Activated CD4-positive, alpha-beta memory T cell treated with anti-CD3 and anti-CD28 coated beads for 36 hours (primary cell): ENCODE measurements at regions of chr1 and their contacts with region 1.

Region 1: DNA sequence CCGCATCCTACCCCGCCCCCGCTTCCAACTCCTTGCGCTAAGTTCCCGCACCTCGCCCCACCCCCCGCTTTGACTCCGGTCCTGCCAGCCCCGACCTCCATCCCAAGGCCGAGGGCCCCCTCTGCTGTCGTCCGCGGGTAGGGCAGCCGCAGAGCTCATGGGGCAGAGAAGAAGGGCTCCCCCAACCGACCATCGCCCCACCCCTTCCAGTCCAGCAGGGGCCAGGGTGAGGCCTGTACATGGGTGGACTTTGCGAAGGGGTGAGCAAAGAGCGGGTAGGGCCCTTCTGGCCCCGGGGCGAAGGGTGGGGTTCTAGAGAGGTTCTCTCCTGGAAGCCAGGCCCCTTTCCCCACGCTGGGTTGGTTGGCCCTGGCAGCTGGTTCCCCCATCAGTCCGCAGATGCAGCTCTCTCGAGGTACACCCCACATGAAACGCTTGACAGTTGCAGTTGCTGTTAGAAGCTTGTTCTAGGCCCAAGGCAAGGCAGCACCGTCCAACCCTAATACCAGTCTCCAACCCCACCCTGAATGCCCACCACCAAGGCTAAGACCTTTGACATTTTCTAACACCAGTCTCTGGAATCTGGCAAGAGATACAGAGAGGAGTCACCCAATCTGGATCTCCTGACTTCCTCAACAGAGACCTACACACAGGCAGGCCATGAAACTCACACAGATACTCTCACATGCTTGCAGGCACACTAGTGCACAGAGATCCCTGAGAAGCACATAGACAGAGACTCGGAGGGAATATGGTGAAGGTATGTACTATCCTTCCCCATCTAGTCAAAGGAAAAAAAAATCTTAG is 25.3 kb upstream of the ADGRB2 start:
- DNase-seq: peak; percentile 98
- H3K4me3 Mint-ChIP-seq: peak overlapping the region; percentile 80
- H3K27ac Mint-ChIP-seq: no peak overlapping the region
- H3K4me1 Mint-ChIP-seq: peaks cover 13% of the 10 kb centered on the region
- H3K27me3 Mint-ChIP-seq: no peaks in the 10 kb centered on the region

Region 2: DNA sequence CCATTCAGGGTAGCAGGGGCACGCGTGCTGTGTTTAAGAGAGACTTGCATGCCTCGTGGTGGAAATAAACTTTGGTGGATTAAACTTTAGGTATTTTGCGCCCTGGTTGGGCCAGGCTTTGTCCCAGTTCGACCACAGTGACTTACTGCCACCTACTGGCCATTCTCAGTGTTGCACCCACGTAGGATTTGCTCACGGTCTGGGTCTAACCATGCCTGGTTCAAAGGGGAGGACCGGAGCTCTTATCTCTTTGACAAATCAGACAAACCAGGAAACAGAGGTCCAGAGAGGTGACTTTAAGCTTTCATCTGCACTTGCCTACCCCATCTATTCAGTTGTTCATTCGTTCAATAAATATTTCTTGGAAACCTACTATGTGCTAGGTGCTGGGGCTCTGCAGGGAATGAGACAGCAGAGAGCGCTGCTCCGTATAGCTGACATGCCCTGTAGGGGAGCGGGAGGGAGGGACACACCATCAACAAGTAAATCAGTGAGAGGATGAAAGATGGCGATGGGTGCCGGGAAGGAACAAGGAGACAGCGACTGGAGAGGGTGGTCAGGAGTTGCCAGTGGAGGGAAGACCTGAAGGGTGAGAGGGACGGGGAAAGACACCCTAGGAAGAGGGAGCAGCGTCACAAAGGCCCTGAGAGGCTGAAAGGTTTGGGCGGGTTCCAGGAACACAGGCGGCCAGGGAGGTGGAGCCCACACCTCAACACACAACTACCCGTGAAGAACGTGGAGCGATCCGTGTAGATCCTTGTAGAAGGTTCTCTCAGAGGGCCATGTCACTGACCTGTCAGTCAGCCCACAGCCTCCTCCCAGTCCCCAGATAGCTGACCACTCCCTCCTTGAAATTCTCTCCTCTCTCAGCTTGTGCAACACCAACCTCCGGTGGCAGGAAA is 240.3 kb before region 1 on chr1:
- CTCF ChIA-PET with region 1: interaction called, 17 read pairs
- POLR2A ChIA-PET with region 1: no interaction called
- intact Hi-C with region 1: no loop called
- DNase-seq: peak; percentile 93
- H3K4me3 Mint-ChIP-seq: peak overlapping the region; percentile 49
- H3K27ac Mint-ChIP-seq: no peak overlapping the region
- H3K4me1 Mint-ChIP-seq: peaks cover 13% of the 10 kb centered on the region
- H3K27me3 Mint-ChIP-seq: peaks cover 9% of the 10 kb centered on the region

Region 3: DNA sequence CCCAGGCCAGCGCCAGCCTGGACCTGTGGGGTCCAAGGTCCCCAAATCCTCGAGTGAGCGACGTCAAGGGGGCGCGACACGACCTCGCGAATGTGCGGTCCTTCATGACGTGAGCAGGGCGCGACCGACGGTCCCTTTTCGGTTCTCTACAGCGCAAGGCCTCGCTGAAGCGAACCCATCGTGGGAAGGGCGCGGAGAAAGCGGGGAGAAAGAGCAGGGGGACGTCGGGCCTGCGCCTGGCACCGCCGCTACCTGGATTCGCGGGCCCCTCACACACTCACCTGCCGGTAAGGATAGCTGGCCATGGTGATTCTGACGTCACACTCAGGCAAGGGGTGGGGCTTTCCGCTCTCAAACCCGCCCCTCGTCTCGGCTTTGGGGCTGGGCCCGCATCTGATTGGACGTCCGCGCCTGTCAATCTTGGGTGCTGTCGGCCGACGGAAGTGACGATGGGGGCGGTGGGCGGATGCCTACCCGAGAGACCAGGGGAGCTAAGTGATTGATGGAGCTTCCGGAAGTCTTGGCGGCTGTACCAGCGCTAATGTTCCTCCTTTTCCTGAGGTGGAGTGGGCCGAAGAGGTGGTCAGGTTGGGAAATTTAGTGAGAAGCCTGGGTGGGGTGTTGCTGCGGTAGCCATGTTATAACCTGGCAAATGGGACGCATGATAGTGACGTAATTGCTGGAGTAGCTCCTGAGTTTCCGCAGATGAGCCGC is 144.7 kb before region 1 on chr1 and contains the start of gene PEF1:
- CTCF ChIA-PET with region 1: interaction called, 16 read pairs
- POLR2A ChIA-PET with region 1: interaction called, 5 read pairs
- intact Hi-C with region 1: loop called (anchors 1 kb)
- DNase-seq: peak; percentile 99
- H3K4me3 Mint-ChIP-seq: peak within 1 kb of the TSS; percentile 100
- H3K27ac Mint-ChIP-seq: peak within 1 kb of the TSS; percentile 100
- H3K4me1 Mint-ChIP-seq: peaks cover 24% of the 10 kb centered on the region
- H3K27me3 Mint-ChIP-seq: no peaks in the 10 kb centered on the region
- total RNA-seq, gene PEF1: 55.3 to 56.4 TPM

Region 4: GRCh38 chr1:31705080-31705866 is 84.2 kb before region 1 on chr1:
- CTCF ChIA-PET with region 1: interaction called, 23 read pairs
- POLR2A ChIA-PET with region 1: no interaction called
- intact Hi-C with region 1: loop called (anchors 2 kb)
- DNase-seq: peak; percentile 88
- H3K4me3 Mint-ChIP-seq: peak overlapping the region; percentile 17
- H3K27ac Mint-ChIP-seq: no peak overlapping the region
- H3K4me1 Mint-ChIP-seq: peaks cover 37% of the 10 kb centered on the region
- H3K27me3 Mint-ChIP-seq: peaks cover 30% of the 10 kb centered on the region

Region 5: GRCh38 chr1:31750858-31751510 is 38.5 kb before region 1 on chr1:
- CTCF ChIA-PET with region 1: interaction called, 29 read pairs
- POLR2A ChIA-PET with region 1: no interaction called
- intact Hi-C with region 1: no loop called
- DNase-seq: peak; percentile 26
- H3K4me3 Mint-ChIP-seq: no peak overlapping the region
- H3K27ac Mint-ChIP-seq: no peak overlapping the region
- H3K4me1 Mint-ChIP-seq: peaks cover 15% of the 10 kb centered on the region
- H3K27me3 Mint-ChIP-seq: peaks cover 1% of the 10 kb centered on the region

Region 6: DNA sequence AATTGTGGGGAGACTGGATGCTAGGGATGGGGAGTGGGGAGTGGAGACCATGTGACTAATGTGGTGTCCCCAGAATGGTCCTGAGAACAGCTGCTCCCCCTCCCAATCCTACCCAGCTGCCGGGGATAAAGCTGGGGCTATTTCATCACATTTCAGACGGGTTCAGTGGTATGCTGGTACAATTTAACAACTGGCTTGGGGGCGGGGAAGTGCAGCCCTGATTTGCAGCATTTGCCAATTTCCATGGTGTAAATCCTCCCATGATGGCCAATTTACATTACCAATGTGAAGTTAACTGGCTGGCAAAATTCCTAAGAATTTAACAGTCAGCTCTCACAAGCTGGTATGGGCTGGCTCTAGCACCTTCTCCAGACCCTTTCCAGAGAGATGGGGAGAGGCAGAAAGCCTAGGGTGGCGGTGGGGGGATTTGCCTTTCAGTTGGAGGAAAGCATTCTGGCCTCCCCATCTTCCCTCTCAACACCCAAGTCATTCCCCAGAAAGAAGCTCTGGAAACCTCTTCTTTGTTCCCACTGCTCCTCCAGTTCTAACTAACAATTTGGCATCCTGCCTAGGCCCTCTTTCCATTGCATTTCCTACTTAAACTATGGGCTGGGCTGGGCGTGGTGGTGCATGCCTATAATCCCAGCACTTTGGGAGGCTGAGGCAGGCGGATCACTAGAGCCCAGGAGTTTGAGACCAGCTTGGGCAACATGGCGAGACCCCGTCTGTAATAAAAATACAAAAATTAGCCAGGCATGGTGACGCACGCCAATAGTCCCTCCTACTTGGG is 14.1 kb before region 1 on chr1:
- CTCF ChIA-PET with region 1: interaction called, 12 read pairs
- POLR2A ChIA-PET with region 1: no interaction called
- intact Hi-C with region 1: no loop called
- DNase-seq: no peak
- H3K4me3 Mint-ChIP-seq: no peak overlapping the region
- H3K27ac Mint-ChIP-seq: no peak overlapping the region
- H3K4me1 Mint-ChIP-seq: peaks cover 39% of the 10 kb centered on the region
- H3K27me3 Mint-ChIP-seq: peaks cover 30% of the 10 kb centered on the region